ENCODE measurements at regions of chr9 and their contacts with region 1.

Region 1: DNA sequence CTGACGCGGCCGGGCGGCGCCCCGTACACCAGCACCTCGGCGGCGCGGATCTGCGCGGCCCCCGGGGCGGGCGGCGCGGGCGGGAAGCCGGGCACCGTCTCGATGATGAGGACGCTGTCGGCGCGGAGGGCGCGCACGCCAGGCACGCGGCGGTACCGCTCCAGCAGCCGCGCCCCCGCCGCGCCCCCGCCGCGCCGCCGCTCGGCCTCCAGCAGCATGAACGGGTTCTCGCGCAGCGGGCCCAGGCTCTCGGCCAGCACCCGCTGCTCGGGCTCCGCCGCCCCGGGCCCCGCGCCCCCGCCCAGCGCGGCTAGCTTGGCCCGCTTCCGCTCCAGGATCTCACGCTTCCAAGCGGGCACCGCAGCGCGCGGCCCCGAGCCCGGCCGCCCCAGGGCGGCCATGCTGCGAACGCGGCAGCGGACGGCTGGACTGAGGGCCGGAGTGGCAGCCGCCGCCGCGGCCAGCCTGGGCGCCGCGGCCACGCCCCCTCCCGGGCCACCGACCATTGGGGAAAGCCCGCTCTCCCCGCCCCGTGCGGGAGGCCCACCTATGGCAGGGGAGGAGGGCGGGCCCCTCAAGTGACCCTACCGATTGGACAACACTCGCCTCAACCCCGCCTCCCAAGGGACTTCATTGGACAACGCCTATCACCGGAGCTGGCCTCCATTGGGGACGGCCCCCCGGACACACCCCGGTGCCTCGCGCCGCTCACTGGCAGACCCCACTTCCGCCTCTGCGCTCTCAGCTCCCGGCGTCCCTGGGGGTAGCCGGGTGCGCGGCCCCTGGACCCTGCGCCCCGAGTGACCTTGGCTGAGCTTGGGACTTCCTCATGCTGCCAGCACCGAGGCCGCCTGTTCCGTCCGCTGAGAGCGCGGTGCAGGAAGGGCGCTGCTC is at the start of gene TPRN:
- DNase-seq: peak; percentile 100
- H3K4me3 ChIP-seq: peak within 1 kb of the TSS; percentile 55 to 74 (median 67)
- H3K27ac ChIP-seq: peak within 1 kb of the TSS; percentile 89 to 92 (median 90)
- H3K4me1 ChIP-seq: peaks cover 34 to 80% (median 71%) of the 10 kb centered on the region in 4 donors
- H3K27me3 ChIP-seq: no peaks in the 10 kb centered on the region
- CTCF ChIP-seq: no peak
- EP300 ChIP-seq: no peak
- POLR2A ChIP-seq: peak; percentile 88
- total RNA-seq, gene TPRN: 76.2 to 228 (median 117) TPM

Region 2: DNA sequence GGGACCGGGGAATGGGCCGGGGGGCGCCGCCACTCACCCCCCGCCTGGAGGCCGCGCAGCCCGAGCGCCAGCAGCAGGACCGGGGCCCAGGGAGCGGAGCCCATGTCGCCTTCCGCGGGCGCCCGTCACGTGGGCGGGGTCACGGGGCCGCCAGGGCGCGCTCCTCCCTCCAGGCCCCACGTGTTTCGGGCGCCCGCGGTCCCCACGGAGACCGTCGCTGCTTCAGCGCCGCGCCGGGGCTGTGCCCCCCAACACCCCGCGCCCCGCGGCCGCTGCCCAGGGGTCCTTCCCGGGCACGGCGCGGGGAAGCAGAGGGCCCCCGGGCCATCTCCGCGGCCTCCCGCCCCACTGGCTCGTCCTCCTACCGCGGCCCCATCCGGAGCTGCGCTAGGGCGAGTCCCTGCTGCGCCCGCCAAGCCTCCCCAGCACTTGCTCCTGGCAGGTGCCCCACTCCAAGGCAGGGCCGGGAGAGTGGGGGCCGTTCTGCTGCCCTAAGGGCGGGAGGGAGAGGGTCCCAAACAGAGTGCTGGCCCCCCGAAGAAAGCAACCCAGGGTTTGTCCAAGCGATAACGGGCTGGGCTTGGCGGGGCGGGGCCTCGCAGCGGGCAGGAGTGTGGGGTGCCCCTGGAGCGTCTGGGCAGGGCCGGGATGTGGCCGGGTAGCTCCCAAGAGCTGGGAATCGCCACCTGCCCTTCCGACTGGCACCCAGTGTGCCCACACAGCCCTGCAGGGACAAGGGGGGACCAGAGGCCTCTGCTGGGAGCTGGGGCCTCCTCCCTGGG is 85.8 kb before region 1 on chr9 and contains the start of gene DPP7:
- in situ Hi-C with region 1: loop called in 1 of 4 experiments (anchors 25 kb)
- intact Hi-C with region 1: no loop called
- DNase-seq: peak; percentile 80
- H3K4me3 ChIP-seq: peak within 1 kb of the TSS; percentile 46 to 94 (median 72)
- H3K27ac ChIP-seq: peak within 1 kb of the TSS; percentile 42 to 70 (median 50)
- H3K4me1 ChIP-seq: peaks cover 0 to 18% (median 11%) of the 10 kb centered on the region in 4 donors
- H3K27me3 ChIP-seq: peaks cover 26% of the 10 kb centered on the region
- CTCF ChIP-seq: no peak
- EP300 ChIP-seq: no peak
- POLR2A ChIP-seq: no peak
- total RNA-seq, gene DPP7: 54.2 to 141 (median 103) TPM